Activated CD4-positive, alpha-beta T cell treated with anti-CD3 and anti-CD28 coated beads for 36 hours (primary cell): ENCODE measurements at regions of chr5 and their contacts with region 1.

Region 1: GRCh38 chr5:139299486-139299885 is 5.9 kb downstream of the MATR3 start:
- DNase-seq: no peak
- ATAC-seq: peak; percentile 58
- H3K4me3 Mint-ChIP-seq: peak overlapping the region; percentile 3
- H3K27ac Mint-ChIP-seq: peak overlapping the region; percentile 82
- H3K4me1 Mint-ChIP-seq: peaks cover 87% of the 10 kb centered on the region
- H3K27me3 Mint-ChIP-seq: no peaks in the 10 kb centered on the region

Region 2: GRCh38 chr5:139312075-139312474 is 12.6 kb after region 1 on chr5:
- CTCF ChIA-PET with region 1: interaction called, 14 read pairs
- POLR2A ChIA-PET with region 1: interaction called, 4 read pairs
- intact Hi-C with region 1: no loop called
- DNase-seq: no peak
- ATAC-seq: no peak
- H3K4me3 Mint-ChIP-seq: no peak overlapping the region
- H3K27ac Mint-ChIP-seq: no peak overlapping the region
- H3K4me1 Mint-ChIP-seq: peaks cover 63% of the 10 kb centered on the region
- H3K27me3 Mint-ChIP-seq: no peaks in the 10 kb centered on the region